ENCODE measurements at regions of chr5 and their contacts with region 1.

Region 1: GRCh38 chr5:115309751-115310370 is 13.4 kb upstream of the CCDC112 start:
- DNase-seq: peak in 2 of 5 donors; percentile 62 to 71
- H3K4me3 ChIP-seq: no peak overlapping the region
- H3K27ac ChIP-seq: no peak overlapping the region
- H3K4me1 ChIP-seq: no peaks in the 10 kb centered on the region
- H3K27me3 ChIP-seq: no peaks in the 10 kb centered on the region
- CTCF ChIP-seq: peak; percentile 46

Region 2: GRCh38 chr5:115100319-115100955 is 209.4 kb before region 1 on chr5:
- intact Hi-C with region 1: no loop called
- DNase-seq: no peak
- H3K4me3 ChIP-seq: no peak overlapping the region
- H3K27ac ChIP-seq: no peak overlapping the region
- H3K4me1 ChIP-seq: no peaks in the 10 kb centered on the region
- H3K27me3 ChIP-seq: no peaks in the 10 kb centered on the region
- CTCF ChIP-seq: no peak

Region 3: GRCh38 chr5:115398719-115399118 is 88.9 kb after region 1 on chr5:
- intact Hi-C with region 1: no loop called
- DNase-seq: no peak
- H3K4me3 ChIP-seq: no peak overlapping the region
- H3K27ac ChIP-seq: no peak overlapping the region
- H3K4me1 ChIP-seq: no peaks in the 10 kb centered on the region
- H3K27me3 ChIP-seq: no peaks in the 10 kb centered on the region
- CTCF ChIP-seq: no peak

Region 4: GRCh38 chr5:115522832-115523403 is 213.1 kb after region 1 on chr5:
- intact Hi-C with region 1: no loop called
- DNase-seq: no peak
- H3K4me3 ChIP-seq: no peak overlapping the region
- H3K27ac ChIP-seq: no peak overlapping the region
- H3K4me1 ChIP-seq: peaks cover 0 to 6% (median 2%) of the 10 kb centered on the region in 3 donors
- H3K27me3 ChIP-seq: no peaks in the 10 kb centered on the region
- CTCF ChIP-seq: no peak

Region 5: DNA sequence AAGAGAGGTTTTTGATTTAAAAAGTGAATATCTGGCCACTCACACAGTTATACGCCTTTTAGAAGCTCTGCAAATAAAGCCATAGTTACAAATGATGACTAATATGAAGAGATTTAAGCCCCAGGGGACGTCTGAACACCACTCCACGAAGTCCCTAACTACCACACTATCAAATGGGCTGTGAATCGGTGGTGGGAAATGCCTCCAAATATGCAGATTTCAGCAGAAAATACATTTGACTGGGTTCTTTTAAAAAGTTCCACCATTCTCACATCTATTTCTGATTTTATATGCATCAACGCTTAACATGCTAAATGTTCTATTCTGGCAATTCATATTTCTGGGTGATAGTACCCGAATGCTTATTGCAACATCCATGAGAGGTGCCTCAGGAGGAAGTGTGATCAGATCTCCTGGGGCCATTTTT is 269.9 kb after region 1 on chr5:
- intact Hi-C with region 1: loop called (anchors 5 kb)
- DNase-seq: no peak
- H3K4me3 ChIP-seq: no peak overlapping the region
- H3K27ac ChIP-seq: no peak overlapping the region
- H3K4me1 ChIP-seq: no peaks in the 10 kb centered on the region
- H3K27me3 ChIP-seq: no peaks in the 10 kb centered on the region
- CTCF ChIP-seq: no peak

Measured in kidney (tissue), 22 donors.